Activated CD4-positive, alpha-beta memory T cell treated with anti-CD3 and anti-CD28 coated beads, Interleukin-2, amount 10 ng/mL, durations not matched to agents 7 days and 5 days (primary cell): ENCODE measurements at regions of chr19 and their contacts with region 1.

Region 1: DNA sequence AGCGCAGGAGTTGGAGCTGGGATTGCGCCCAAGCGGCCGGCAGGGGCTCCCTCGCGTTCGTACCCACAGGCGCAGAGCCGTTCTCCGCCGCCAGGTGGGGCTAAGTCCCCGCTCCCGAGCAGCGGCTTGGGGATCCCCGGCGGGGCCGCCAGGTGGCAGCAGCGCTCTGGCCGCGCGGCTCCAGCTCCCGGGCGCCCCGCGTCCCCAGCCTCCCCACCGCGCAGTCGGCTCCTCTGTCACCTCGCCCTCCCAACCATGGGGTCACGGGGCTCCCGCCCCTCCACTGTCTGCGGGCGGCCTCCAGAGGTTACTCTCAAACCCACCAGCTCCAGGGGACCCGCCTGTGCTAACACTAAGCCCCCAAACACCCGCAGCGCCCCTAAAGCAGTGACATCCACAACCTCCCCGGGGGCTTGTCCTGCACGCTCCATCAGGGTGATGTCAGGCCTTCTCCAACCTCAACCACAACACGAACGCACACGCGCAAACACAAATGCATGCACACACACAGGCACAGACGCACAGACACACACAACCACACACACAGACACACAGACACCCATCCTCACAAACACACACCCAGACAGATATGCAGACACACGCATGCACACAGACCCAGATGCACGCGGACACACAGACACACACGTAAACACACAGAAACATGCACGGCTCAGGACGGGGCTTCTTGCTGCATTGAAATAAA is 18.4 kb upstream of the KCTD15 start:
- DNase-seq: peak; percentile 87
- H3K4me3 Mint-ChIP-seq: no peak overlapping the region
- H3K27ac Mint-ChIP-seq: no peak overlapping the region
- H3K4me1 Mint-ChIP-seq: peaks cover 14% of the 10 kb centered on the region
- H3K27me3 Mint-ChIP-seq: peaks cover 13% of the 10 kb centered on the region

Region 2: GRCh38 chr19:33795370-33796163 is 17.3 kb after region 1 on chr19:
- CTCF ChIA-PET with region 1: interaction called, 12 read pairs
- POLR2A ChIA-PET with region 1: interaction called, 4 read pairs
- DNase-seq: peak; percentile 64
- H3K4me3 Mint-ChIP-seq: peak overlapping the region; percentile 71
- H3K27ac Mint-ChIP-seq: peak overlapping the region; percentile 63
- H3K4me1 Mint-ChIP-seq: peaks cover 17% of the 10 kb centered on the region
- H3K27me3 Mint-ChIP-seq: peaks cover 28% of the 10 kb centered on the region

Region 3: DNA sequence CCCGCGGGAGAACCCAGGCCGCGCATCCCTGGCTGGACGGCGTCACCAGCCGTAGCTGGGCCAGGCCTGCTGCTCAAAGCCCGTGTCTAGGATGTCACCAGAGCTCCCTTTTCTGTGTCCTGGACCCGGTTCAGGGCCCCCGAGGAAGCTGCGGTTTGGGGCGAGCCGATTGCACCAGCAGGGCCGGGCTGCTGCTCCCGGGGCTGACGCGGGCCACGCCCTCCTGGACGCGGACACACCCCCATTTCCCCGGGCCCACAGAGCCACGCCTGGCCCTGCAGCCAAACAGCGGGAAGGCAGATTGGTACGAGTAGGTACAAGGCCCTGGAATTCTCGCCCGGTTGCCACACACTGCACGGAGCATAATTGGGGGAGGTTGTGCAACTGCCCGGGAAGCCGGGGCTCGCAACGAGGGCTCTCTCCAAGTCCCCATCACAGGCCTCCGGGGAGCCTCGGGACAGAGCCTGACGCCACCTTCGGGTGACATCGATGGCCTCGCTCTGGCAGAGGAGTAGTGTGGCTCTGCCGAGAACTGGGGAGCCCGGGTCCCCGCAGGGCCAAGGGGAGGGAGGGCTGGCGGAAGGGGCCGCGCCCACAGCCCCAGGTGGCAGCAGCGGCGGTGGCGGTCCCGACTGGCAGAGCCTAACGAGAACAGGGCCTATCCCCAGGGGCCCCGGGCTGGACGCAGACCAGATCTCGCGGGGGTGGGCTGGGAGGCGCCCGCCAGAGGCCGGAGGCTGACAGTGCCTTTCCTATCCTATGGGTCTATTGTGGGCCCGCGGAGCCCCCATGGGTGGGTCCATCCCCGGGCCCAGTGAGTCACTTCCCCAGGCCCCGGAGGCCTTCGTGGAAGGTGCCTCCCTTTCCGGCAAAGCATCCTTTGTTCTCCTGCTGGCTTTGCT is 41.9 kb after region 1 on chr19:
- CTCF ChIA-PET with region 1: interaction called, 14 read pairs
- POLR2A ChIA-PET with region 1: no interaction called
- DNase-seq: peak; percentile 89
- H3K4me3 Mint-ChIP-seq: peak overlapping the region; percentile 80
- H3K27ac Mint-ChIP-seq: peak overlapping the region; percentile 88
- H3K4me1 Mint-ChIP-seq: peaks cover 53% of the 10 kb centered on the region
- H3K27me3 Mint-ChIP-seq: no peaks in the 10 kb centered on the region

Region 4: DNA sequence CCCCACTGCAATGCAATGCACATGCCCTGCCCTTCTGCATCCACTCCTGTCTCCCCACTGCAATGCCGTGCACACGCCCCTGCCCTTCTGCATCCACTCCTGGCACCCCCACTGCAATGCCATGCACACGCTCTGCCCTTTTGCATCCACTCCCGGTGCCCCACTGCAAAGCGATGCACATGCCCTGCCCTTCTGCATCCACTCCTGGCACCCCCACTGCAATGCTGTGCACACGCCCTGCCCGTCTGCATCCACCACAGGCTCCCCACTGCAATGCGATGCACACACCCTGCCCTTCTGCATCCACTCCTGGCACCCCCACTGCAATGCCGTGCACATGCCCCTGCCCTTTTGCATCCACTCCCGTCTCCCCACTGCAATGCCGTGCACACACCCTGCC is 116.5 kb after region 1 on chr19:
- CTCF ChIA-PET with region 1: no interaction called
- POLR2A ChIA-PET with region 1: no interaction called
- DNase-seq: no peak
- H3K4me3 Mint-ChIP-seq: no peak overlapping the region
- H3K27ac Mint-ChIP-seq: no peak overlapping the region
- H3K4me1 Mint-ChIP-seq: no peaks in the 10 kb centered on the region
- H3K27me3 Mint-ChIP-seq: no peaks in the 10 kb centered on the region

Region 5: GRCh38 chr19:33998739-33999345 is 220.6 kb after region 1 on chr19:
- CTCF ChIA-PET with region 1: interaction called, 82 read pairs
- POLR2A ChIA-PET with region 1: interaction called, 4 read pairs
- DNase-seq: no peak
- H3K4me3 Mint-ChIP-seq: no peak overlapping the region
- H3K27ac Mint-ChIP-seq: no peak overlapping the region
- H3K4me1 Mint-ChIP-seq: no peaks in the 10 kb centered on the region
- H3K27me3 Mint-ChIP-seq: peaks cover 12% of the 10 kb centered on the region

Region 6: DNA sequence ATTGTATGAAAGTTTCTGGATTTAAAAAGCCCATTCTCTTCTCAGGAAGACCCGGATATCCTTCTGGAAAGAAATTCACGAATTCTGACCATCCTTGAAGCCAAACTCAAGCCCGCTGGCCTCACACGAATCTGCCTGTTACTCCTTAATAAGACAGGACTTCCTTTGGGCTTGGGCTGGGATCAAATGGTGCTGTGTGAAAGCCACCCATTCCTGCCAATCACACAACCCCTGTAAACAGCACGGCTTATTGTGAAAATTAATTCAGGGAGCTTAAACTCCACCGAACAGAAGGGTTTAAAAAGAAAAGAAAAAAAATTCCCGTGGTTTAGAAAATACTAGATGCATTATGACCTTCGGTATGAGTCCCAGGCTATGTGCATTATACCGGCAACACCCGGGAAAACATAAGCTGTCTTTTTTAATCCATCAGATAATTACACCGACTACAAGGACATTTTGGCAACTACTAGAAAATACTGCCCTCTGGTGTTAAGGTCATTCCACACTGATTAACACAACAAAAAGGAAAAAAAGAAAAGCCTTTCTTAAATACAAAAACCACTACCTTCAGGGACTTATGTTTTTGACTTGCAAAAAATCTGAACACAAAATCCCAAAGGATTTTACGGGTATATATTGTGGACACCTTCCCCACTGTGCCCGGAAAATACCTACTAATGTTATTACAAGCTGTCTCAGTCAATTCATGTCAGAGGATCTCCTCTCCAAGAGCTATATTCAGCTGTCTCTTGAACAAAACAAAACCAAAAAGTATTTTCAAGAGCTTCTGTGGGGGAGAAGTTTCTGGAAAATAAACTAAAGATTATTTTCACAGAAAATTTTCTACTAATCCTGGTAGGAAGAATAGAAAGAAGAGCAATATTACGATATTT is 318.0 kb after region 1 on chr19:
- CTCF ChIA-PET with region 1: interaction called, 52 read pairs
- POLR2A ChIA-PET with region 1: interaction called, 6 read pairs
- DNase-seq: no peak
- H3K4me3 Mint-ChIP-seq: no peak overlapping the region
- H3K27ac Mint-ChIP-seq: no peak overlapping the region
- H3K4me1 Mint-ChIP-seq: no peaks in the 10 kb centered on the region
- H3K27me3 Mint-ChIP-seq: peaks cover 12% of the 10 kb centered on the region